Panc1 (cell line): ENCODE measurements at regions of chr17 and their contacts with region 1.

Region 1: GRCh38 chr17:58172369-58173071 is 5.7 kb downstream of the OR4D2 start:
- DNase-seq: no peak
- ATAC-seq: peak; percentile 88
- H3K4me3 ChIP-seq: no peak overlapping the region
- H3K27ac ChIP-seq: no peak overlapping the region
- H3K4me1 ChIP-seq: no peaks in the 10 kb centered on the region
- H3K27me3 ChIP-seq: peaks cover 46% of the 10 kb centered on the region
- CTCF ChIP-seq: peak; percentile 78

Region 2: DNA sequence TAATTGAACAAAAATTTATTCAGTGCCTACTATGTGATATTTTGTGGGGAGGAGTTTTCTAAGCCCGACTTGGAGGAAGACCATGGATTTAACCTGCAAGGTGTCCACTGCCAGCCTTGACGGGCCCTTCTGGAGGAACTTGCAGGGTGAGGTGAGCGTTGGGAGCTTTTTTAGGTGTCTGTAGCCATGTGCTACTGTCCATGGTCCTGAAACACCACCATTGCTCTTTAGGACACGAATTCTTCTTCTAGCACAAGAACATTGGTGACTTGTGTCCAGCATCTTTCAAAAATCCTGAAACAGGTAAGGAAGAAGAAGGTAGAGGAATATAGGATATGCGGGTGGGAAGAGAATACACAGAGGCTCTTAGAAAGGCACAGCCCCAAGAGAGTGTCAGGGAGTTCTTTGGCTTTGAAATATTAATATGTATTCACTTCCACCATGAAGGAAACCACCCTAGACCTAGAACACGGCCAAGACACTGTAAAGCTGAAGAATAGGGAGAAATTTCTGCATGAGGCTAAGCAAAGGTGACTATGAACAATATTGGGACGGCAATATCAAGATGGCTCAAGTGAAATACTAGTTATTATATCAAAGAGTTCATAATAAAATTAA is 52.2 kb before region 1 on chr17:
- CTCF ChIA-PET with region 1: interaction called, 5 read pairs
- POLR2A ChIA-PET with region 1: no interaction called
- in situ Hi-C with region 1: no loop called
- intact Hi-C with region 1: loop called (anchors 1 kb)
- DNase-seq: no peak
- ATAC-seq: peak; percentile 56
- H3K4me3 ChIP-seq: no peak overlapping the region
- H3K27ac ChIP-seq: no peak overlapping the region
- H3K4me1 ChIP-seq: no peaks in the 10 kb centered on the region
- H3K27me3 ChIP-seq: peaks cover 10% of the 10 kb centered on the region
- CTCF ChIP-seq: no peak

Region 3: GRCh38 chr17:58338841-58339754 is 166.6 kb after region 1 on chr17:
- CTCF ChIA-PET with region 1: no interaction called
- POLR2A ChIA-PET with region 1: no interaction called
- in situ Hi-C with region 1: no loop called
- intact Hi-C with region 1: no loop called
- DNase-seq: no peak
- ATAC-seq: no peak
- H3K4me3 ChIP-seq: no peak overlapping the region
- H3K27ac ChIP-seq: no peak overlapping the region
- H3K4me1 ChIP-seq: no peaks in the 10 kb centered on the region; the same call in 1 of the 2 replicates
- H3K27me3 ChIP-seq: no peaks in the 10 kb centered on the region
- CTCF ChIP-seq: no peak

Region 4: DNA sequence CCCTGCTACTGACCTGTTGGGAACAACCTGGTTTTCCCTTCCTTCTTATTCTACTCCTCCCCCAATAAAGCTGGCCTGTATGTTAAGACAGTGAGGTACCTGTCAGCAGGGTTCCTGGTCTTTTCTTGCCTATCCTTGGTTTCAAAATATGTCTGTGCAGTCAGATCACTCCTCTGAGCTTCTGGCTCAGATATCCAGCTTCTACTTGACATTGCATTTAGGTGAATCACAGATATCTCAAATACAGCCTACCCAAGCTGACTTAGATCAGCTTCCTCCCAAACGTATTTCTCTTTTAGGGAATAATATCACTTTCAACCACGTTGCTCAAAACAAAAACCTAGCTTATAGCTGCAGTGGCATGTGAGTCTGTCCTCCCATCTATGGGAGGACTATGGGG is 470.6 kb after region 1 on chr17:
- CTCF ChIA-PET with region 1: no interaction called
- POLR2A ChIA-PET with region 1: no interaction called
- in situ Hi-C with region 1: no loop called
- intact Hi-C with region 1: no loop called
- DNase-seq: no peak
- ATAC-seq: no peak; the same call in 1 of the 2 replicates
- H3K4me3 ChIP-seq: no peak overlapping the region
- H3K27ac ChIP-seq: no peak overlapping the region
- H3K4me1 ChIP-seq: no peaks in the 10 kb centered on the region
- H3K27me3 ChIP-seq: no peaks in the 10 kb centered on the region
- CTCF ChIP-seq: no peak